CD4-positive, alpha-beta memory T cell (primary cell): ENCODE measurements at regions of chr12 and their contacts with region 1.

Region 1: GRCh38 chr12:22529281-22530060 is 14.9 kb downstream of the C2CD5 start:
- DNase-seq: peak in 4 of 5 donors; percentile 42 to 54 (median 51)
- H3K4me3 ChIP-seq: no peak overlapping the region
- H3K4me3 Mint-ChIP-seq: no peak overlapping the region
- H3K27ac ChIP-seq: no peak overlapping the region
- H3K27ac Mint-ChIP-seq: no peak overlapping the region
- H3K4me1 ChIP-seq: no peaks in the 10 kb centered on the region
- H3K4me1 Mint-ChIP-seq: peaks cover 8 to 18% (median 12%) of the 10 kb centered on the region in 4 donors
- H3K27me3 ChIP-seq: no peaks in the 10 kb centered on the region
- H3K27me3 Mint-ChIP-seq: no peaks in the 10 kb centered on the region

Region 2: DNA sequence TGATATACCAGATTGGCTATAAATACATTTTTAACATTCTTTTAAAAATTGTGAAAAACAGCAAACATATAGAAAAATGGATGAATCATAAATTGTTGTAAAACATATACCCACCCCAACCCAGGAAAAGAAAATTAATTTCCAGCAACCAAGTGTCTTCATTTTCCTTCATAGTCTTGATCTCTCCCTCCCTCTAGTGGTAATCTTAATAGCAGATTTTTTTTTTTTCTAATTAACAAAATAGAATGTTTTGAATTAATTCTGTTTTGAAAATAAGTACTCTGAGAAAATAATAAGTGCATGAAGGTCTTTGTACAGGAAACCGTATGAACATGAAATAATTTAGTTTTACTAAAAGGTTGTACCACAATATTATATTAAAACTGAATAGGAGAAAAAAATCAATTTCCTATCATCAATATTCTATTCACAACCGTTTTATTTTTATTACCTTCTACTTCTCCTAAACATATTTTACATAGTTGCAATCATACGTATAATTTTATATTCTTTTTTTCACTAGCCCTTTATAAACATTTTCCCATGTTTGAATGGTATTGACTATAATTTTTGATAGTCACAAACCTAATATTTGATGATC is 102.5 kb after region 1 on chr12:
- CTCF ChIA-PET with region 1: interaction called, 19 read pairs
- POLR2A ChIA-PET with region 1: no interaction called
- intact Hi-C with region 1: loop called (anchors 1 kb)
- DNase-seq: peak in 4 of 5 donors; percentile 31 to 39 (median 37)
- H3K4me3 ChIP-seq: no peak overlapping the region
- H3K4me3 Mint-ChIP-seq: peak overlapping the region in 1 of 8 donors; percentile 36
- H3K27ac ChIP-seq: no peak overlapping the region
- H3K27ac Mint-ChIP-seq: peak overlapping the region in 3 of 7 donors; percentile 8 to 33 (median 23)
- H3K4me1 ChIP-seq: peaks cover 75% of the 10 kb centered on the region
- H3K4me1 Mint-ChIP-seq: peaks cover 39 to 73% (median 57%) of the 10 kb centered on the region in 4 donors
- H3K27me3 ChIP-seq: no peaks in the 10 kb centered on the region
- H3K27me3 Mint-ChIP-seq: no peaks in the 10 kb centered on the region

Region 3: GRCh38 chr12:22670762-22671161 is 141.3 kb after region 1 on chr12:
- CTCF ChIA-PET with region 1: interaction called, 6 read pairs
- POLR2A ChIA-PET with region 1: no interaction called
- intact Hi-C with region 1: loop called (anchors 1 kb)
- DNase-seq: no peak
- H3K4me3 ChIP-seq: no peak overlapping the region
- H3K4me3 Mint-ChIP-seq: no peak overlapping the region
- H3K27ac ChIP-seq: no peak overlapping the region
- H3K27ac Mint-ChIP-seq: no peak overlapping the region
- H3K4me1 ChIP-seq: no peaks in the 10 kb centered on the region
- H3K4me1 Mint-ChIP-seq: peaks cover 0 to 5% (median under 1%) of the 10 kb centered on the region in 4 donors
- H3K27me3 ChIP-seq: no peaks in the 10 kb centered on the region
- H3K27me3 Mint-ChIP-seq: no peaks in the 10 kb centered on the region

Region 4: GRCh38 chr12:22974865-22975264 is 445.4 kb after region 1 on chr12:
- CTCF ChIA-PET with region 1: no interaction called
- POLR2A ChIA-PET with region 1: no interaction called
- intact Hi-C with region 1: no loop called
- DNase-seq: no peak
- H3K4me3 ChIP-seq: no peak overlapping the region
- H3K4me3 Mint-ChIP-seq: no peak overlapping the region
- H3K27ac ChIP-seq: no peak overlapping the region
- H3K27ac Mint-ChIP-seq: no peak overlapping the region
- H3K4me1 ChIP-seq: no peaks in the 10 kb centered on the region
- H3K4me1 Mint-ChIP-seq: no peaks in the 10 kb centered on the region
- H3K27me3 ChIP-seq: no peaks in the 10 kb centered on the region
- H3K27me3 Mint-ChIP-seq: peaks cover 0 to 2% of the 10 kb centered on the region in 2 donors